Activated naive CD8-positive, alpha-beta T cell treated with anti-CD3 and anti-CD28 coated beads, Interleukin-2, amount 10 ng/mL, durations not matched to agents 7 days and 5 days (primary cell): ENCODE measurements at regions of chr17 and their contacts with region 1.

Region 1: GRCh38 chr17:72726936-72727335 is 365.6 kb downstream of the SLC39A11 start:
- DNase-seq: peak; percentile 58
- ATAC-seq: peak; percentile 93
- H3K4me3 Mint-ChIP-seq: peak overlapping the region; percentile 74
- H3K27ac Mint-ChIP-seq: peak overlapping the region; percentile 91
- H3K4me1 Mint-ChIP-seq: peaks cover 36% of the 10 kb centered on the region
- H3K27me3 Mint-ChIP-seq: peaks cover 3% of the 10 kb centered on the region

Region 2: DNA sequence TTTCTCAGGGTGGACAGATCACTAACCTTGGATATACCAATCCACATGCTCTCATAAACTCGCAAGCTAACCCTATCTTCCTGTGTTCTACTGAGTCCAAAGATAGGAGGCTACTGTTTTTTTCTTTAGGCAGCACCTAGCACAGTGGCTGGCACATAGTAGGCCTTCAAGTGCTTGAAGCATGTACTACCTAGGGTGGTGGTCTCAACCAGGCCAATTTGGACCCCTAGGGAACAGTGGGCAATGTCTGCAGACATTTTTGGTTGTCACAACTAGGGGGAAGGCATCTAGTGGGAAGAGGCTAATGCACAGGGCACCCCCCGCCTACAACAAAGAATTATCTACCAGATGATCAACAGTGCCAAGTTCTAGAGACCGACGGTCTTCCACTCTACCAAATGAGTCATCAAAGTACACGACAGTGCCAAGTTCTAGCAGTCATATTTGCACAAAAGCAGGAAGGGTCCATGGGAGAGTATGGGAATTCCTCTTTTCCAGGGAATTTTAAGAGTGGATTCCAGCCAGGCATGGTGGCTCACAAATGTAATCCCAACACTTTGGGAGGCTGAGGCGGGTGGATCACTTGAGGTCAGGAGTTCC is 24.7 kb before region 1 on chr17:
- POLR2A ChIA-PET with region 1: no interaction called
- DNase-seq: no peak
- ATAC-seq: no peak
- H3K4me3 Mint-ChIP-seq: no peak overlapping the region
- H3K27ac Mint-ChIP-seq: no peak overlapping the region
- H3K4me1 Mint-ChIP-seq: peaks cover 2% of the 10 kb centered on the region
- H3K27me3 Mint-ChIP-seq: no peaks in the 10 kb centered on the region

Region 3: GRCh38 chr17:73156166-73156840 is 429.4 kb after region 1 on chr17:
- POLR2A ChIA-PET with region 1: interaction called, 11 read pairs
- DNase-seq: peak; percentile 73
- ATAC-seq: peak; percentile 89
- H3K4me3 Mint-ChIP-seq: no peak overlapping the region
- H3K27ac Mint-ChIP-seq: no peak overlapping the region
- H3K4me1 Mint-ChIP-seq: peaks cover 8% of the 10 kb centered on the region
- H3K27me3 Mint-ChIP-seq: peaks cover 33% of the 10 kb centered on the region